H1 (cell line): ENCODE measurements at regions of chr1 and their contacts with region 1.

Region 1: GRCh38 chr1:54323324-54323739 is 82.9 kb downstream of the SSBP3 start:
- DNase-seq: no peak
- H3K4me3 ChIP-seq: no peak overlapping the region
- H3K27ac ChIP-seq: no peak overlapping the region
- H3K4me1 ChIP-seq: peaks cover 22 to 43% (median 34%) of the 10 kb centered on the region in 4 experiments
- H3K27me3 ChIP-seq: no peaks in the 10 kb centered on the region
- CTCF ChIP-seq: peak; percentile 36 to 51 (median 47)
- EP300 ChIP-seq: no peak
- POLR2A ChIP-seq: no peak
- RAD21 ChIP-seq: peak; percentile 58 to 73

Region 2: GRCh38 chr1:54335011-54335754 is 11.9 kb after region 1 on chr1:
- CTCF ChIA-PET with region 1: interaction called, 19 read pairs
- POLR2A ChIA-PET with region 1: interaction called, 9 read pairs
- DNase-seq: no peak
- H3K4me3 ChIP-seq: no peak overlapping the region
- H3K27ac ChIP-seq: no peak overlapping the region
- H3K4me1 ChIP-seq: peaks cover 20 to 40% (median 29%) of the 10 kb centered on the region in 4 experiments
- H3K27me3 ChIP-seq: no peaks in the 10 kb centered on the region
- CTCF ChIP-seq: no peak
- EP300 ChIP-seq: no peak
- POLR2A ChIP-seq: no peak
- RAD21 ChIP-seq: no peak